Mucosa of descending colon (tissue), 3 donors: ENCODE measurements at regions of chr7 and their contacts with region 1.

Region 1: DNA sequence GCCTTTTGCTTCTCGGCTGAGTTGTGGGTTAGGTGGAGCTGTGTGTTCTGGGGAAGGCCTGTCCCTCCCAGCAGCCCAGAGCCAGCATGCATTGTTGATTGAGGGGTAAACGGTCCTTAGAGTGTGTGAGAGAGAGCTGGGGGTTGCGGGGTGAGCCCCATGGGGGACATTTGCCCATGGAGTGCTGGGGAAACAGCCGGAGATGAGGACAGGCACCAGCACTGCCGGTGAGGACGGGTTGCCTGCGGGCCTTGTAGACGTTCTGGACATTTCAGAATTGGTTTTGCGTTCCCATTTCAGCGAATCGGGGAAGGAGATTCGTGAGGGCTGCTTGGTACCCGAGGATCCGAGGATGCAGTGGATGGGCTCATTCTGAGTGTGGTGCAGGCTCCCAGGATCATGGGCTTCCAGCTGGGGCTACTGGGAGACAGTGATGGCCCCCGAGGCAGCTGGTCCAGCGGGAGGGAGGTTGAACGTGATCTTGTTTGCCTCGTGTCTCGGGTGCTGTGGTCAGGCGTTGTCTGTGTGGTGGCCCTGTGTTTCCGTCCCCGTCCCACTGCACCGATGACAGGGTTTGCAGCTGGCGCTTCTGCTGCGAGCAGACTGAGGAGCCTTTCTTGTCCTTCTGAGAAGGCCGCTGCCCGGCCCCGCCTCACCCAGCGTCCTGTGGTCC is 113.9 kb downstream of the CYTH3 start:
- DNase-seq: no peak
- ATAC-seq: no peak
- H3K4me3 ChIP-seq: no peak overlapping the region
- H3K4me1 ChIP-seq: no peaks in the 10 kb centered on the region
- CTCF ChIP-seq: no peak

Region 2: DNA sequence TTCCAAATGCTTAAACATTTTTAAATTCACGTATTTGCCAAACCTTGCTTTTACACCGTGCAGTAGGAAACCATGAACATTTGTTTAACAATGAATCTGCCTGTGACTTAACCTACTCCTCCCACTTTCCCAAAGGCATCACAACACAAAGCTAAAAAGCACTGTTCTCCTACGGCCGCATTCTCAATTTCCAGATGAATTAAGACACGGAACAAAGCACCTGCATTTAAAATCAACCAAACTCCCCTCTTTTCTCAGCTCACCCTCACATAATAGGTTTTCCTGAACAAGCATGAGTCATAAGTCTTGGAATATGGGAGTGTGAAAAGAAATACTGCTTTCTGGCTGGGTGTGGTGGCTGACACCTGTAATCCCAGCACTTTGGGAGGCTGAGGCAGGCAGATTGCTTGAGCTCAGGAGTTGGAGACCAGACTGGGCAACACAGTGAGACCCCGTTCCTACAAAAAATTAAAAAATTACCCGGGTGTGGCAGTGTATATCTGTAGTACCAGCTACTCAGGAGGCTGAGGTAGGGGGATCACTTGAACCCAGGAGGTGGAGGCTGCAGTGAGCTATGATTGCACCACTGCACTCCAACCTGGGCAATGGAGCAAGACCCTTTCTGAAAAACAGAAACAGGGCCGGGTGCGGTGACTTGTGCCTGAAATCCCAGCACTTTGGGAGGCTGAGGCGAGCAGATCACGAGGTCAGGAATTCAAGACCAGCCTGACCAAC is 165.6 kb after region 1 on chr7:
- intact Hi-C with region 1: loop called in 1 of 2 experiments (anchors 5 kb)
- DNase-seq: no peak
- ATAC-seq: no peak
- H3K4me3 ChIP-seq: no peak overlapping the region
- H3K4me1 ChIP-seq: peaks cover 3% of the 10 kb centered on the region
- CTCF ChIP-seq: no peak